HEK293 (cell line): ENCODE measurements at regions of chr11 and their contacts with region 1.

Region 1: DNA sequence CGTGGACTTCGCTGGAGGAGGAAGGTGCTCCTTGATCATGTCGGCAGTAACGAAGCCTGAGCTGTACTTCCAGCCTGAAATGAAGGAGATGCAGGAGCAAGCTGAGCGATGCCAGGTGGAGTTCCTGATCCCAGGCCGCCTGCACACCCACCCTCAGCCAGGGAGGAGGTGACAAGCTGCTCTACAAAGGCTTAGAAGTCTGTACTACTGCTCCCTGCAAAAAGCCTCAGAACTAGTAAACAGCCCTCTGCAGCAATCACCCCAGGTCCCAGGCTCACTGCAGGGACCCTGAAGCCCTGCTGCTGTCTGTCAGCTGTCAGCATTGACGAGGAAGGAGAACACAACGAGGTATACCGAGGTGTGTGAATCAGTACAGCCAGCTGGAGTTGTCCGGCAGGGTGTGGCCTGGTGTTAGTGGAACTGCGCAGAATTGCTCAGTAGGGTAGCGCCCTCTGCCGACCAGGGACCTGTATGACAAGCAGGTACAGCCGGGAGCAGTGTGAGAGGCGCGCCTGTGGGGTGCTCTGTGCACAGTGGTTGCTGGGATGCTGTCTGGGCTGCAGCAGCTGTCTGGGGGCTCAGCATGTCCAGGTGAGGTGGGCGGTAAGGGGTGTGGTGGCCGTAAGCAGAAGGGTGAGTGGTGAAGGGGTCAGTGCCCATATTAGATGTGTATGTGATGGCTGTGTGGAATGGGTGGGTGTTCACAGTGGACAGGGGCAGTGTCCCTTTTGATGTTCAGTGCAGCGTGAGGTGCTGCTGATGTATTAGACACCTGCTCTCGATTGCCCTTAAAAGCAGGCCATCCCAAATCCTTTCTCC is 7.6 kb downstream of the CYB5R2 start:
- H3K4me3 ChIP-seq: no peak overlapping the region
- H3K27ac ChIP-seq: no peak overlapping the region
- H3K4me1 ChIP-seq: no peaks in the 10 kb centered on the region
- CTCF ChIP-seq: peak; percentile 83; the same call in 1 of the 2 replicates

Region 2: GRCh38 chr11:7513234-7514098 is 152.2 kb before region 1 on chr11 and contains the start of gene PPFIBP2:
- CTCF ChIA-PET with region 1: interaction called, 23 read pairs
- POLR2A ChIA-PET with region 1: no interaction called
- H3K4me3 ChIP-seq: peak within 1 kb of the TSS; percentile 82
- H3K27ac ChIP-seq: no peak within 1 kb of the TSS
- H3K4me1 ChIP-seq: no peaks in the 10 kb centered on the region
- CTCF ChIP-seq: peak; percentile 54

Region 3: GRCh38 chr11:7564803-7565202 is 100.9 kb before region 1 on chr11:
- CTCF ChIA-PET with region 1: interaction called, 12 read pairs
- POLR2A ChIA-PET with region 1: no interaction called
- H3K4me3 ChIP-seq: no peak overlapping the region
- H3K27ac ChIP-seq: no peak overlapping the region
- H3K4me1 ChIP-seq: no peaks in the 10 kb centered on the region
- CTCF ChIP-seq: no peak

Region 4: GRCh38 chr11:7688238-7688826 is 22.6 kb after region 1 on chr11:
- CTCF ChIA-PET with region 1: interaction called, 14 read pairs
- POLR2A ChIA-PET with region 1: no interaction called
- H3K4me3 ChIP-seq: no peak overlapping the region
- H3K27ac ChIP-seq: no peak overlapping the region
- H3K4me1 ChIP-seq: no peaks in the 10 kb centered on the region; the same call in none of the 2 replicates
- CTCF ChIP-seq: no peak

Region 5: GRCh38 chr11:8080674-8081590 is 415.2 kb after region 1 on chr11 and contains the start of gene TUB:
- CTCF ChIA-PET with region 1: no interaction called
- POLR2A ChIA-PET with region 1: no interaction called
- H3K4me3 ChIP-seq: peak within 1 kb of the TSS; percentile 59
- H3K27ac ChIP-seq: peak within 1 kb of the TSS; percentile 42; the same call in 1 of the 2 replicates
- H3K4me1 ChIP-seq: peaks cover 6% of the 10 kb centered on the region; the same call in 1 of the 2 replicates
- CTCF ChIP-seq: peak; percentile 39; the same call in 1 of the 2 replicates